A549 (cell line): ENCODE measurements at regions of chr2 and their contacts with region 1.

Region 1: GRCh38 chr2:174985630-174986029 is 19.6 kb downstream of the CHN1 start:
- DNase-seq: no peak
- ATAC-seq: peak in 1 of 2 experiments; percentile 38; a peak in 1 of 6 replicates
- H3K4me3 ChIP-seq: no peak overlapping the region
- H3K27ac ChIP-seq: no peak overlapping the region
- H3K4me1 ChIP-seq: peaks cover 7% of the 10 kb centered on the region; the same call in 2 of the 3 replicates
- CTCF ChIP-seq: peak; percentile 89
- EP300 ChIP-seq: no peak
- POLR2A ChIP-seq: no peak
- RAD21 ChIP-seq: peak; percentile 86 to 87

Region 2: GRCh38 chr2:174748948-174749347 is 236.7 kb before region 1 on chr2:
- CTCF ChIA-PET with region 1: interaction called, 30 read pairs
- POLR2A ChIA-PET with region 1: no interaction called
- DNase-seq: peak; percentile 54 to 57
- ATAC-seq: peak; percentile 88 to 95
- H3K4me3 ChIP-seq: no peak overlapping the region
- H3K27ac ChIP-seq: no peak overlapping the region
- H3K4me1 ChIP-seq: no peaks in the 10 kb centered on the region
- CTCF ChIP-seq: peak; percentile 86
- EP300 ChIP-seq: no peak
- POLR2A ChIP-seq: no peak
- RAD21 ChIP-seq: peak; percentile 76

Region 3: GRCh38 chr2:174971865-174972781 is 13.5 kb before region 1 on chr2:
- CTCF ChIA-PET with region 1: interaction called, 33 read pairs
- POLR2A ChIA-PET with region 1: interaction called, 5 read pairs
- DNase-seq: peak; percentile 41 to 76
- ATAC-seq: peak; percentile 89 to 90
- H3K4me3 ChIP-seq: peak overlapping the region; percentile 17; the same call in 1 of the 3 replicates
- H3K27ac ChIP-seq: peak overlapping the region; percentile 71 to 87
- H3K4me1 ChIP-seq: peaks cover 59% of the 10 kb centered on the region
- CTCF ChIP-seq: no peak
- EP300 ChIP-seq: peak; percentile 42 to 59; a peak in 2 of 5 replicates
- POLR2A ChIP-seq: no peak
- RAD21 ChIP-seq: no peak

Region 4: GRCh38 chr2:174997110-174997509 is 11.5 kb after region 1 on chr2:
- CTCF ChIA-PET with region 1: interaction called, 16 read pairs
- POLR2A ChIA-PET with region 1: no interaction called
- DNase-seq: no peak
- ATAC-seq: no peak
- H3K4me3 ChIP-seq: no peak overlapping the region
- H3K27ac ChIP-seq: no peak overlapping the region
- H3K4me1 ChIP-seq: peaks cover 23% of the 10 kb centered on the region
- CTCF ChIP-seq: no peak
- EP300 ChIP-seq: no peak
- POLR2A ChIP-seq: no peak
- RAD21 ChIP-seq: no peak

Region 5: GRCh38 chr2:175019566-175020327 is 34.1 kb after region 1 on chr2:
- CTCF ChIA-PET with region 1: no interaction called
- POLR2A ChIA-PET with region 1: no interaction called
- DNase-seq: no peak
- ATAC-seq: no peak
- H3K4me3 ChIP-seq: no peak overlapping the region
- H3K27ac ChIP-seq: no peak overlapping the region
- H3K4me1 ChIP-seq: no peaks in the 10 kb centered on the region
- CTCF ChIP-seq: no peak
- EP300 ChIP-seq: no peak
- POLR2A ChIP-seq: no peak
- RAD21 ChIP-seq: no peak